Endothelial cell of umbilical vein (primary cell): ENCODE measurements at regions of chr14 and their contacts with region 1.

Region 1: DNA sequence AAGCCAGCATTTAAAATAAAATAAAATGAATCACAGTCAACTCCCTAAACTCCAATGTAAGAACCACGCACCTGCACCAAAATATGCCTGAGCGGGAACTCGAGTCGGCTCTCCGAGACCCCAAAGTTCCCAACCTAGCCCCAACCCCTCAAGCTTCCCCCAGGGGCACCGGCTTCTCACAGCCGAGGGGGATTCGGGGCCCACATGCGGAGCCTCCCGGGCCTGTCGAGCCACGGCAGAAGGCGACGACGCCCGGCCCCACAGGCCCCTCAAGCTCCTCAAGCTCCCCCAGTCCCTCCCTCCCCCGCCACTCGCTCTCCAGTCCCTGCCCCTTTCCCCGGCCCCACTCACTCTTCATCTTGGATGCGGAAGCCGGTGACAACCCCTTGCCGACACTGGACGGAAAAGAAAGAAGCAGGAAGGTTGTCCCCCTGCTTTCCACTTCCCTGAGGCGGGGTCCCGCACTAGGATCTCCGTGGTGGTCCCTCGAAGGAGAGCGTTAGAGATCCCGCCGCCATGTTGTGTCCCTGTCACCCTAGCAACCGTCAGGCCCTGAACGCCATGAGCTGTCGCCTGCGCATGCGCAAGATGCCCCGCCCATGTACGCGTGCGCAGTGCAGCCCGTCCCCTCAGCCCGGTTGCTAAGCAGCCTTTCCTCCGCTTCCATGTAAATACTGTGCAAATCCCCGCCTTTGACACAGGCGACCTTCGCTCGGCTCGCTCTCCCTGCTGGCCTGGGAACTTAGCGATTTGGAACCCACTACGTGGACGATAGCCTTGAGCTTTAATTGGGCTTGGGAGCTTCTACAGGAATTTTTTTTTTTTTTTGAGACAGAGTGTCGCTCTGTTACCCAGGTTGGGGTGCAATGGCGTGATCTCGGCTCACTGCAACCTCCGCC is at the start of gene MOK:
- DNase-seq: peak; percentile 99
- H3K4me3 ChIP-seq: peak within 1 kb of the TSS; percentile 40 to 86 (median 55)
- H3K27ac ChIP-seq: peak within 1 kb of the TSS; percentile 52
- H3K4me1 ChIP-seq: peaks cover 4% of the 10 kb centered on the region
- H3K27me3 ChIP-seq: no peaks in the 10 kb centered on the region
- CTCF ChIP-seq: no peak
- POLR2A ChIP-seq: no peak
- total RNA-seq, gene MOK: 6.1 and 6.4 TPM in 2 replicates

Region 2: GRCh38 chr14:102139248-102140026 is 165.4 kb before region 1 on chr14 and contains the start of gene WDR20:
- CTCF ChIA-PET with region 1: no interaction called
- POLR2A ChIA-PET with region 1: no interaction called
- dilution Hi-C with region 1: no loop called
- intact Hi-C with region 1: loop called (anchors 1 kb)
- DNase-seq: peak; percentile 97
- H3K4me3 ChIP-seq: peak within 1 kb of the TSS; percentile 57 to 79 (median 72)
- H3K27ac ChIP-seq: peak within 1 kb of the TSS; percentile 19
- H3K4me1 ChIP-seq: peaks cover 17% of the 10 kb centered on the region
- H3K27me3 ChIP-seq: no peaks in the 10 kb centered on the region
- CTCF ChIP-seq: no peak
- POLR2A ChIP-seq: peak; percentile 77
- total RNA-seq, gene WDR20: 22.4 and 23.6 TPM in 2 replicates

Region 3: GRCh38 chr14:102222009-102222575 is 82.8 kb before region 1 on chr14:
- CTCF ChIA-PET with region 1: no interaction called
- POLR2A ChIA-PET with region 1: no interaction called
- dilution Hi-C with region 1: no loop called
- intact Hi-C with region 1: no loop called
- DNase-seq: no peak
- H3K4me3 ChIP-seq: no peak overlapping the region
- H3K27ac ChIP-seq: no peak overlapping the region
- H3K4me1 ChIP-seq: peaks cover 8% of the 10 kb centered on the region
- H3K27me3 ChIP-seq: no peaks in the 10 kb centered on the region
- CTCF ChIP-seq: no peak
- POLR2A ChIP-seq: no peak